T-cell (primary cell): ENCODE measurements at regions of chr19 and their contacts with region 1.

Region 1: GRCh38 chr19:14366498-14366915 is 14.7 kb upstream of the ADGRE5 start:
- DNase-seq: peak; percentile 72 to 97 (median 93)
- ATAC-seq: peak; percentile 59 to 76 (median 69)
- H3K4me3 ChIP-seq: peak overlapping the region in 1 of 2 donors; percentile 17
- H3K4me3 Mint-ChIP-seq: peak overlapping the region; percentile 21 to 73 (median 59)
- H3K27ac ChIP-seq: peak overlapping the region; percentile 100
- H3K27ac Mint-ChIP-seq: peak overlapping the region; percentile 90 to 92
- H3K4me1 ChIP-seq: peaks cover 27 to 93% of the 10 kb centered on the region in 2 experiments
- H3K4me1 Mint-ChIP-seq: peaks cover 71 to 79% (median 74%) of the 10 kb centered on the region in 3 donors
- H3K27me3 ChIP-seq: no peaks in the 10 kb centered on the region
- H3K27me3 Mint-ChIP-seq: no peaks in the 10 kb centered on the region

Region 2: GRCh38 chr19:14383661-14384555 is 17.4 kb after region 1 on chr19:
- CTCF ChIA-PET with region 1: interaction called, 6 to 23 read pairs
- POLR2A ChIA-PET with region 1: interaction called, 20 to 61 read pairs
- DNase-seq: peak in 4 of 35 experiments; percentile 32 to 77 (median 52)
- ATAC-seq: peak in 3 of 4 experiments; percentile 7 to 22 (median 12)
- H3K4me3 ChIP-seq: peak overlapping the region; percentile 83 to 88
- H3K4me3 Mint-ChIP-seq: peak overlapping the region; percentile 86 to 94 (median 87)
- H3K27ac ChIP-seq: peak overlapping the region; percentile 99
- H3K27ac Mint-ChIP-seq: peak overlapping the region; percentile 96 to 97
- H3K4me1 ChIP-seq: peaks cover 19 to 81% of the 10 kb centered on the region in 2 experiments
- H3K4me1 Mint-ChIP-seq: peaks cover 44 to 57% (median 49%) of the 10 kb centered on the region in 3 donors
- H3K27me3 ChIP-seq: no peaks in the 10 kb centered on the region
- H3K27me3 Mint-ChIP-seq: no peaks in the 10 kb centered on the region

Region 3: GRCh38 chr19:14405758-14406644 is 39.5 kb after region 1 on chr19:
- CTCF ChIA-PET with region 1: interaction called, 11 to 12 read pairs
- POLR2A ChIA-PET with region 1: interaction called, 3 to 5 read pairs
- DNase-seq: peak; percentile 75 to 94 (median 86)
- ATAC-seq: peak; percentile 61 to 82 (median 75)
- H3K4me3 ChIP-seq: no peak overlapping the region
- H3K4me3 Mint-ChIP-seq: peak overlapping the region in 1 of 3 donors; percentile 53
- H3K27ac ChIP-seq: peak overlapping the region; percentile 64
- H3K27ac Mint-ChIP-seq: peak overlapping the region in 1 of 2 donors; percentile 63
- H3K4me1 ChIP-seq: peaks cover 0 to 58% of the 10 kb centered on the region in 2 experiments
- H3K4me1 Mint-ChIP-seq: peaks cover 31 to 46% (median 32%) of the 10 kb centered on the region in 3 donors
- H3K27me3 ChIP-seq: no peaks in the 10 kb centered on the region
- H3K27me3 Mint-ChIP-seq: no peaks in the 10 kb centered on the region

Region 4: GRCh38 chr19:14487370-14488125 is 121.0 kb after region 1 on chr19:
- CTCF ChIA-PET with region 1: interaction called in 1 of 2 experiments, 3 read pairs
- POLR2A ChIA-PET with region 1: interaction called in 1 of 2 experiments, 11 read pairs
- DNase-seq: no peak
- ATAC-seq: no peak
- H3K4me3 ChIP-seq: no peak overlapping the region
- H3K4me3 Mint-ChIP-seq: no peak overlapping the region
- H3K27ac ChIP-seq: no peak overlapping the region
- H3K27ac Mint-ChIP-seq: no peak overlapping the region
- H3K4me1 ChIP-seq: peaks cover 0 to 9% of the 10 kb centered on the region in 2 experiments
- H3K4me1 Mint-ChIP-seq: peaks cover 7 to 13% (median 11%) of the 10 kb centered on the region in 3 donors
- H3K27me3 ChIP-seq: no peaks in the 10 kb centered on the region
- H3K27me3 Mint-ChIP-seq: no peaks in the 10 kb centered on the region